HEK293 (cell line): ENCODE measurements at regions of chr2 and their contacts with region 1.

Region 1: GRCh38 chr2:234550511-234551107 is 53.7 kb upstream of the ARL4C start:
- H3K4me3 ChIP-seq: no peak overlapping the region
- H3K27ac ChIP-seq: no peak overlapping the region
- H3K4me1 ChIP-seq: no peaks in the 10 kb centered on the region
- CTCF ChIP-seq: peak; percentile 83

Region 2: DNA sequence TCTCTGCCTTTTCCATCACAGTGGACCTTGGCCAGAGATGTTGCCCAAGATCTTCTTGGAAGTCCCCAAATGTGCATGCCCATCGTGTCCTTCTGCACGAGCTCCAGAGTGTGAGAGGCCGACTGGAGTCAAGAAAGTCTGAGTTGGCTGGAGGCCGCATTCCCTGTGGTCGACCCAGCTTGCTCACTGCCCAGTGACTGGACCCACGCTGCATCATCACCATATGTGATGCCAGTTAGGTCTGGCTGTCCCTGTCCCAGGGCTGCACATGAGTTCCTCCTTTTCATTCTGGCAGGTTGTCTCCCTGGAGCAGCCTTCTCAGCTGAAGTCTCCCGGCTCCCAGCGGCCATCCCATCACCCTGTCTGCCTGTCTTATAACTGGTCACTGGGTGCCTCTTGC is 147.5 kb before region 1 on chr2:
- CTCF ChIA-PET with region 1: no interaction called
- POLR2A ChIA-PET with region 1: no interaction called
- H3K4me3 ChIP-seq: no peak overlapping the region
- H3K27ac ChIP-seq: no peak overlapping the region
- H3K4me1 ChIP-seq: no peaks in the 10 kb centered on the region
- CTCF ChIP-seq: no peak

Region 3: DNA sequence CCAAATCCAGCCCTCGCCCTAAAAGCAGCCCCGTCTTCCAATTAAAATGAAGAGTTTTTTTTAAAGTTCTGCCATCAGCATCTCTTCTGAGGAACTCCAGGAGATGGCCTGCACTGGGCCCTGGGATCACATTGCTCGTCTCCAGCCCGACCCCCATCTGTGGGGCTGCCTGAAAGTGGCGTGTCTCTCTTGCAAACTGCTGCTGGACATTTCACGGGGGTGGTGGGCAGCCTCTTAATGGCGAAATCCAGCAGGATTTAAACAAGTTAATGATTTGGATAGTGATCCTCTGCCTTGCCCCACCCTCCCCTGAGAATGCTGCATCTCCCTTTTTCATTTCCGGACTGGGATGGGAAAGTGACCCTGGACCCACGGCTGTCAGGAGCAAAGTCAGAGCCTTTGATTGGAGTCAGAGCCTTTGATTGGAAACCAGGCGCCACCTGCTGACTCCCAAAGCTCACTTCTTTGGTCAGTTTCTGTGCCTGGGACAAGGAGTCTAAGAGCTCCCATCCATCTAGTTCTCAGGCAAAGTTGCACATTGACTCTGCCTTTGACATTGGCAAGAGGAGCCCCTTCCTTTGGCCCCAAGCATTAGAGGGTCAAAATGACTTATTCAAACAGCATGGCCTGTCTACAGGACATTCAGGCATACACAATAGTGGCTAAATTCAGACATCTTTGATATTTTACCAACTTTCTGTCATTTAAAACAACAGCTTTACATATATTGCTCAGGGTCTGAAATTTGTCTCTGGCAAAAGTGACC is 556.4 kb after region 1 on chr2:
- CTCF ChIA-PET with region 1: interaction called, 16 read pairs
- POLR2A ChIA-PET with region 1: no interaction called
- H3K4me3 ChIP-seq: no peak overlapping the region
- H3K27ac ChIP-seq: no peak overlapping the region
- H3K4me1 ChIP-seq: no peaks in the 10 kb centered on the region
- CTCF ChIP-seq: peak; percentile 73

Region 4: GRCh38 chr2:235116885-235117492 is 566.4 kb after region 1 on chr2:
- CTCF ChIA-PET with region 1: interaction called, 24 read pairs
- POLR2A ChIA-PET with region 1: interaction called, 3 read pairs
- H3K4me3 ChIP-seq: no peak overlapping the region
- H3K27ac ChIP-seq: no peak overlapping the region
- H3K4me1 ChIP-seq: no peaks in the 10 kb centered on the region
- CTCF ChIP-seq: peak; percentile 36; the same call in 1 of the 2 replicates